H1 (cell line): ENCODE measurements at regions of chr10 and their contacts with region 1.

Region 1: GRCh38 chr10:59625721-59626522 is 83.7 kb downstream of the SLC16A9 start:
- DNase-seq: peak; percentile 29 to 53
- H3K4me3 ChIP-seq: no peak overlapping the region
- H3K27ac ChIP-seq: no peak overlapping the region; the same call in 1 of the 2 replicates
- H3K4me1 ChIP-seq: peaks cover 3 to 4% (median 4%) of the 10 kb centered on the region in 4 experiments; a peak in 4 of 7 replicates
- H3K27me3 ChIP-seq: no peaks in the 10 kb centered on the region
- CTCF ChIP-seq: peak; percentile 2 to 95 (median 90)
- EP300 ChIP-seq: no peak
- POLR2A ChIP-seq: no peak
- RAD21 ChIP-seq: peak; percentile 98 to 99

Region 2: DNA sequence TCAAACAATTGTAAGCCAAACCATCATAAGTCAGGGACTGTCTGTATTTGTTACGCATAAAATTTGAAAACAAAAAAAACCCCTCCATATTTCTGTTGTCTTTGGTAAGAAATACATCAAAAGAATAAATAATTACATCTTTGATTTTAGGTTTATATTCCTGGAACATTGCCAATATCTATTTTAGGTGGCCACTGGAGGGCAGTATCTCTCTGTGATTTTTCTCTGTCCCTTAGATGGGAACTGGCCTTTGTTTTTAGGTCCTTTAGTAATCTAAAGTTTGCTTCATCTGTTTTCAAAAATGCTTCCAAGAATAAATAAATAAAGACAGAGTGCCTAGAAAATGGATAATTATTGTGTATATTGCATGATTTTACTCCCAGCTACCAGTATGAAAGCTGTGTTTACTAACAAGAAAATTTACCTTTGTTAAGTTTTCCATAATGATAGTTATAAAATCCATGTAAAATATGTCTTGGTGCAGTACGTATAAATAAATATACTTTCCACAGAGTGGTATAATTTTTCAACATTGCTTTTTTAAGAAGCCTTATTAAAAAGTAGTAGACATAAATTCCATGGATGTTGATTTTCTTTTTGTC is 385.2 kb before region 1 on chr10:
- CTCF ChIA-PET with region 1: interaction called, 20 read pairs
- POLR2A ChIA-PET with region 1: no interaction called
- DNase-seq: peak in 1 of 2 experiments; percentile 49
- H3K4me3 ChIP-seq: no peak overlapping the region
- H3K27ac ChIP-seq: no peak overlapping the region
- H3K4me1 ChIP-seq: no peaks in the 10 kb centered on the region
- H3K27me3 ChIP-seq: no peaks in the 10 kb centered on the region
- CTCF ChIP-seq: peak in 2 of 3 experiments; percentile 39 to 42; a peak in 2 of 4 replicates
- EP300 ChIP-seq: no peak
- POLR2A ChIP-seq: no peak
- RAD21 ChIP-seq: peak; percentile 83 to 86

Region 3: DNA sequence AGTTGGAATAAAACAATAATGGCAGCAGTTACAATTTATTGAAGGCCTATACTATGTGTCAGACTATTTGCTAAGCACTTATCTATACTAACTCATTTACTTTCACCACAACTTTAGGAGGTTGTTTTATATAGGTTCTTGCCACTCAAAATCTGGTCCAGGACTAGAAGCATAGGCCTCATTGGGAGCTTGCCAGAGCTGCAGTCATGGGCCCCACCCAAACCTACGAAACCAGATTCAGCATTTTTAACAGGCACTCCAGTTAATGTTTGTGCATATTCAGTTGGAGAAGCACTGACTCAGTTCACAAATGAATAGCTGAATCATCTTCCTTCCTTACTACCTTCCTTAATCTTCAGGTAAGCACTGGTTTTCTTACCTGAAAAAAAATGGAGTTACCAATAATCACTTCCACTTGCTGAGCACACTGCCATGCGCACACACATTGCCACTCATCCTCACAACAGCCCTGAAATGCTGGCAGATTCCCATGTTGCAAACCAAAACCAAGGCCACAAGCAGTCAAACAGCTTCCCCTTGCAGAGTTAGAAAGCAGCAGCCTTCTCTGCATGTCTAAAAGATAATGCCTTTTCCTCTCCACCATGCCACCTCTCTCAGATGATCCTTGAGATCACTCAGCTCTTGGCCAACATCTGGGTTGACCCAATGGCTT is 38.7 kb before region 1 on chr10:
- CTCF ChIA-PET with region 1: interaction called, 26 read pairs
- POLR2A ChIA-PET with region 1: no interaction called
- DNase-seq: no peak
- H3K4me3 ChIP-seq: no peak overlapping the region
- H3K27ac ChIP-seq: no peak overlapping the region
- H3K4me1 ChIP-seq: no peaks in the 10 kb centered on the region; a peak in 1 of 7 replicates
- H3K27me3 ChIP-seq: no peaks in the 10 kb centered on the region
- CTCF ChIP-seq: no peak
- EP300 ChIP-seq: no peak
- POLR2A ChIP-seq: no peak
- RAD21 ChIP-seq: no peak

Region 4: DNA sequence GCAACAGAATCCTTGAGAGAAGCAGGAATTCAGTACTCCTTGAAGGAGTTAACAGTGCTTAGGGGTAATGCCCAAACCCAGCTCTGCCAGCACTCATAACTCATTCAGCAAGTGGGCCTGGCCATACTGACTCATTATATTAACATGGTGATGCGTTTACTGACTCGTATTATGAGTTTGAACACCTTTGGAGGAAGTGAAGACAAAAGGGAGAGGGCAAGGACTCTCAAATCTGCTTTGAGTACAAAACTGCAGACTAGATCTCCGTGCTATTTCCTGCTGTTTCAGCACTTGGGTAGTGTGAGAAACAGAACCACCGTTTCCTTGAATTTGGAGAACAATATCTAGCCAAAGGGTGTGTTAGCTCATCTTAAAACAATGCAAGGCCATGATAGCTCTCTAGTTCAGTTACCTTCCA is 53.0 kb after region 1 on chr10:
- CTCF ChIA-PET with region 1: interaction called, 46 read pairs
- POLR2A ChIA-PET with region 1: no interaction called
- DNase-seq: no peak
- H3K4me3 ChIP-seq: no peak overlapping the region
- H3K27ac ChIP-seq: no peak overlapping the region
- H3K4me1 ChIP-seq: peaks cover 0 to 2% (median 0%) of the 10 kb centered on the region in 4 experiments; a peak in 2 of 7 replicates
- H3K27me3 ChIP-seq: no peaks in the 10 kb centered on the region
- CTCF ChIP-seq: no peak
- EP300 ChIP-seq: no peak
- POLR2A ChIP-seq: no peak
- RAD21 ChIP-seq: no peak

Region 5: DNA sequence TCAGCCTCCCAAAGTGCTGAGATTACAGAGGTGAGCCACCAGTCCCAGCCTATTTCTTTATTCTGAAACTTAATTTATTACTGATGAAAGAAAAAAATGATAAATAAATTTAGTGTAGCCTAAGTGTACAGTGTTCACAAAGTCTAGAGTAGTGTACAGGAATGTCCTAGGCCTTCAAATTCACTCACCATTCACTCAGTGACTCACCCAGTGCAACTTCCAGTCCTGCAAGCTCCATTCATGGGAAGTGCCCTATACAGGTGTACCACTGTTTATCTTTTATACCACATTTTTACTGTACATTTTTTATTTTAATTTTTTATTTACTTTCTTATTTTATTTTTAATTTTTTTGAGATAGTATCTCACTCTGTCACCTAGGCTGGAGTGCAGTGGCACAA is 115.1 kb after region 1 on chr10:
- CTCF ChIA-PET with region 1: no interaction called
- POLR2A ChIA-PET with region 1: no interaction called
- DNase-seq: no peak
- H3K4me3 ChIP-seq: no peak overlapping the region
- H3K27ac ChIP-seq: no peak overlapping the region
- H3K4me1 ChIP-seq: no peaks in the 10 kb centered on the region
- H3K27me3 ChIP-seq: no peaks in the 10 kb centered on the region
- CTCF ChIP-seq: no peak
- EP300 ChIP-seq: no peak
- POLR2A ChIP-seq: no peak
- RAD21 ChIP-seq: no peak

Region 6: DNA sequence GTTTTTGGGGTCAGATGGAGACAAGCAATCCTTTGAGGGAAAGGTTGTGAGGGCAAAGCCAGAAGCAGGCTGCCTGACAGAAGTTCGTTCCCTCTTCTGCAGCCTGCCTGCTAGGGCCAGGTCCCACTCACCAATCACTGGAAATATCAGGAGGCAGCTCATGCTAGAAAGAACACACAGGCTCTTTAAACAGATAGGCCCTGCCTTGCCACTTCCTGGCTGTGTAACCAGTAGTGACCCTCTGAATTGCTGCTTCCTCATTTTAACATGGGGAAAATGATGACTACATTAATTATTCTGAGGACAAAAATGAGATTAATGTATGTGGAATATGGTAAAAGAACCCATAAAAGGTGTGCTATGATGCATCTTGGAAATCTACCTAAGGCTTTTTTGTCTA is 177.8 kb after region 1 on chr10:
- CTCF ChIA-PET with region 1: interaction called, 40 read pairs
- POLR2A ChIA-PET with region 1: no interaction called
- DNase-seq: no peak
- H3K4me3 ChIP-seq: no peak overlapping the region
- H3K27ac ChIP-seq: no peak overlapping the region; the same call in 1 of the 2 replicates
- H3K4me1 ChIP-seq: peaks cover 0 to 6% (median 2%) of the 10 kb centered on the region in 4 experiments; a peak in 3 of 7 replicates
- H3K27me3 ChIP-seq: no peaks in the 10 kb centered on the region; a peak in 1 of 7 replicates
- CTCF ChIP-seq: no peak
- EP300 ChIP-seq: no peak
- POLR2A ChIP-seq: no peak
- RAD21 ChIP-seq: no peak

Region 7: GRCh38 chr10:59830601-59831259 is 204.8 kb after region 1 on chr10:
- CTCF ChIA-PET with region 1: interaction called, 16 read pairs
- POLR2A ChIA-PET with region 1: no interaction called
- DNase-seq: peak; percentile 29 to 70
- H3K4me3 ChIP-seq: no peak overlapping the region
- H3K27ac ChIP-seq: no peak overlapping the region
- H3K4me1 ChIP-seq: peaks cover 0 to 8% (median 3%) of the 10 kb centered on the region in 4 experiments; a peak in 3 of 7 replicates
- H3K27me3 ChIP-seq: no peaks in the 10 kb centered on the region
- CTCF ChIP-seq: peak; percentile 67 to 84 (median 78)
- EP300 ChIP-seq: no peak
- POLR2A ChIP-seq: no peak
- RAD21 ChIP-seq: peak; percentile 83